Mammary epithelial cell (primary cell): ENCODE measurements at regions of chrX and their contacts with region 1.

Region 1: GRCh38 chrX:68365341-68365740 is 68.0 kb downstream of the OPHN1 start:
- DNase-seq: no peak
- H3K4me3 ChIP-seq: no peak overlapping the region
- H3K27ac ChIP-seq: no peak overlapping the region
- H3K4me1 ChIP-seq: no peaks in the 10 kb centered on the region
- H3K27me3 ChIP-seq: no peaks in the 10 kb centered on the region
- CTCF ChIP-seq: no peak

Region 2: GRCh38 chrX:68375803-68376202 is 10.5 kb after region 1 on chrX:
- CTCF ChIA-PET with region 1: no interaction called
- dilution Hi-C with region 1: no loop called
- in situ Hi-C with region 1: no loop called
- intact Hi-C with region 1: loop called (anchors 1 kb)
- DNase-seq: no peak
- H3K4me3 ChIP-seq: no peak overlapping the region
- H3K27ac ChIP-seq: no peak overlapping the region
- H3K4me1 ChIP-seq: no peaks in the 10 kb centered on the region
- H3K27me3 ChIP-seq: no peaks in the 10 kb centered on the region
- CTCF ChIP-seq: no peak